GM12878 (cell line): ENCODE measurements at regions of chr12 and their contacts with region 1.

Region 1: GRCh38 chr12:49515266-49515665 is 23.6 kb upstream of the KCNH3 start:
- DNase-seq: no peak
- ATAC-seq: no peak
- H3K4me3 ChIP-seq: no peak overlapping the region
- H3K27ac ChIP-seq: no peak overlapping the region
- H3K4me1 ChIP-seq: no peaks in the 10 kb centered on the region
- H3K27me3 ChIP-seq: no peaks in the 10 kb centered on the region
- CTCF ChIP-seq: no peak
- EP300 ChIP-seq: no peak
- POLR2A ChIP-seq: no peak
- RAD21 ChIP-seq: no peak

Region 2: DNA sequence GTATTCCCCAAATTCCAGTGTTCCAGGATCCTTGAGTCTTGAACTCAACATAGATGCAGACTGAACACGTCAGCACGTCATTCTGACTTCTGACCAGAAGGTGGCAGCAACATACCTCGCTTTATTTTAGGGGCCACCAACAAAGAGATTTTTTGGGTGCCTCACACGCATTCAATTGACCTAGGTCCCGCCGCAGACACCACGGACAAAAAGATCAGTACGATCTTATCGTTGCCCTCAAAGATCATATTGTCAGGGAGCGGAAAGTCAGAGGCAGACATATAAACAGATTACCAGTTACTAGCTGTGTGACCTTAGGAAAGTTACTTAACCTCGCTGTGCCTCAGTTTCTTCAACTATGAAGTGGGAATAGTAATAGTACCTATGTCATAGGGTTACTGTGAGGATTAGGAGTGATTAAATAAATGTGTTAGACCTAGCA is 226.8 kb before region 1 on chr12:
- CTCF ChIA-PET with region 1: interaction called, 11 read pairs
- POLR2A ChIA-PET with region 1: no interaction called
- RAD21 ChIA-PET with region 1: interaction called, 5 read pairs
- SMC1A ChIA-PET with region 1: interaction called, 10 read pairs
- in situ Hi-C with region 1: no loop called
- intact Hi-C with region 1: loop called (anchors 1 kb)
- DNase-seq: peak; percentile 19
- ATAC-seq: peak; percentile 80
- H3K4me3 ChIP-seq: no peak overlapping the region
- H3K27ac ChIP-seq: no peak overlapping the region
- H3K4me1 ChIP-seq: no peaks in the 10 kb centered on the region
- H3K27me3 ChIP-seq: peaks cover 0 to 2% of the 10 kb centered on the region in 2 experiments; a peak in 2 of 4 replicates
- CTCF ChIP-seq: peak; percentile 69 to 86 (median 84)
- EP300 ChIP-seq: no peak
- POLR2A ChIP-seq: no peak
- RAD21 ChIP-seq: peak; percentile 85

Region 3: GRCh38 chr12:49347384-49348237 is 167.7 kb before region 1 on chr12:
- CTCF ChIA-PET with region 1: interaction called, 17 read pairs
- POLR2A ChIA-PET with region 1: no interaction called
- RAD21 ChIA-PET with region 1: interaction called, 5 read pairs
- SMC1A ChIA-PET with region 1: interaction called, 740 read pairs
- in situ Hi-C with region 1: no loop called
- intact Hi-C with region 1: no loop called
- DNase-seq: no peak
- ATAC-seq: peak; percentile 88
- H3K4me3 ChIP-seq: peak overlapping the region; percentile 49
- H3K27ac ChIP-seq: no peak overlapping the region
- H3K4me1 ChIP-seq: peaks cover 34% of the 10 kb centered on the region
- H3K27me3 ChIP-seq: peaks cover 13 to 22% of the 10 kb centered on the region in 2 experiments
- CTCF ChIP-seq: peak; percentile 85 to 96 (median 86)
- EP300 ChIP-seq: no peak
- POLR2A ChIP-seq: no peak
- RAD21 ChIP-seq: peak; percentile 47

Region 4: GRCh38 chr12:49451468-49452259 is 63.6 kb before region 1 on chr12:
- CTCF ChIA-PET with region 1: interaction called, 3 read pairs
- POLR2A ChIA-PET with region 1: interaction called, 8 read pairs
- RAD21 ChIA-PET with region 1: no interaction called
- SMC1A ChIA-PET with region 1: interaction called, 13 read pairs
- in situ Hi-C with region 1: no loop called
- intact Hi-C with region 1: no loop called
- DNase-seq: peak; percentile 62
- ATAC-seq: peak; percentile 96
- H3K4me3 ChIP-seq: no peak overlapping the region
- H3K27ac ChIP-seq: peak overlapping the region; percentile 74
- H3K4me1 ChIP-seq: peaks cover 18% of the 10 kb centered on the region
- H3K27me3 ChIP-seq: no peaks in the 10 kb centered on the region
- CTCF ChIP-seq: no peak
- EP300 ChIP-seq: no peak
- POLR2A ChIP-seq: no peak
- RAD21 ChIP-seq: no peak

Region 5: DNA sequence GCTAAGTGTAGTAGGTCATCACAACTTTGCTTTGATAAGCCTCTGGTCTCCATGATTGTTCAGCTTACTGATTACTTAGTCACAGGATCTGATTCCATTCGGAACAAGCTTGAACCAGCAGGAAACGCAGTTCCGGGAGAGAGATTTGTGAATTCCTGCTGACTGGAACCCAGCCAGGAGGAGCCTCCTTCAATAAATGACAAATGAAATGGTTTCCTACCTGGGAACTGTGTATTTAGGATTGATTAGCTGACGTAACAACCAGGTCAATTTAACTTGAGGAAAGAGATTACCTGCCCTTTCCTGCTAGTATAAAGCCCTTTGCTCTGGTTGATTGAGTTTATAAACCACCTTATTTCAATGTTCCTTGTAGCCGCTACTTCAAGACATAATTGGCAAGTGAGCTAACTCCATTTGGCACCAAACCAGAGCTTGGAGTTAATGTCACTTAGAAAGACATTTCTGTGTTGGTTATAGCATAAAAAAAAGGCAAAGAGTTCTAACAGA is 11.5 kb before region 1 on chr12:
- CTCF ChIA-PET with region 1: interaction called, 25 read pairs
- POLR2A ChIA-PET with region 1: interaction called, 5 read pairs
- RAD21 ChIA-PET with region 1: interaction called, 5 read pairs
- SMC1A ChIA-PET with region 1: interaction called, 43 read pairs
- in situ Hi-C with region 1: no loop called
- intact Hi-C with region 1: no loop called
- DNase-seq: no peak
- ATAC-seq: no peak
- H3K4me3 ChIP-seq: no peak overlapping the region
- H3K27ac ChIP-seq: no peak overlapping the region
- H3K4me1 ChIP-seq: peaks cover 11% of the 10 kb centered on the region
- H3K27me3 ChIP-seq: no peaks in the 10 kb centered on the region
- CTCF ChIP-seq: no peak
- EP300 ChIP-seq: no peak
- POLR2A ChIP-seq: no peak
- RAD21 ChIP-seq: no peak

Region 6: GRCh38 chr12:49580572-49581535 is 65.6 kb after region 1 on chr12:
- CTCF ChIA-PET with region 1: interaction called, 64 read pairs
- POLR2A ChIA-PET with region 1: interaction called, 3 read pairs
- RAD21 ChIA-PET with region 1: interaction called, 10 read pairs
- SMC1A ChIA-PET with region 1: interaction called, 10 read pairs
- in situ Hi-C with region 1: no loop called
- intact Hi-C with region 1: no loop called
- DNase-seq: no peak
- ATAC-seq: peak; percentile 92
- H3K4me3 ChIP-seq: peak overlapping the region; percentile 57; the same call in 1 of the 2 replicates
- H3K27ac ChIP-seq: peak overlapping the region; percentile 41
- H3K4me1 ChIP-seq: peaks cover 17% of the 10 kb centered on the region
- H3K27me3 ChIP-seq: no peaks in the 10 kb centered on the region
- CTCF ChIP-seq: peak; percentile 89 to 92 (median 90)
- EP300 ChIP-seq: no peak
- POLR2A ChIP-seq: no peak
- RAD21 ChIP-seq: peak; percentile 88

Region 7: DNA sequence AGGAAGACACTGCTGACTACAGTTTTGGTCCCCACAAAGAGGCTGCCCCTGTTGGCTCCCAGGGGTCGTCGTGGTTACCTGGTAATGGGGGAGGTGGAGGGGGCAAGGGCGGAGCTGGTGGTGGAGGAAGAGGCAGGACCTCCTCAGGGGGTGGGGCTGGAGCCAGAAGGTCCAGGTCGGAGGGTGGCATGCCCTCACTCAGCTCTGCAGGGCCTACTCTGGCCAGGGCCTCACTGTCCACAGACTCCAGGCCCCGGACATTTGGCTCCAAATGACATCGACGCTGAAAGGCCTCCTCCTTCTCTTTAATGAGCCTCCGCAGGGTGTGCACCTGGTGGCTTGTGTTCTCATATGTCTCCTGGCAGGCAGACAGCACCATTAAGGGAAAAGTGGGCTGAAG is 136.6 kb after region 1 on chr12:
- CTCF ChIA-PET with region 1: no interaction called
- POLR2A ChIA-PET with region 1: no interaction called
- RAD21 ChIA-PET with region 1: no interaction called
- SMC1A ChIA-PET with region 1: no interaction called
- in situ Hi-C with region 1: no loop called
- intact Hi-C with region 1: no loop called
- DNase-seq: no peak
- ATAC-seq: no peak
- H3K4me3 ChIP-seq: no peak overlapping the region
- H3K27ac ChIP-seq: no peak overlapping the region
- H3K4me1 ChIP-seq: no peaks in the 10 kb centered on the region
- H3K27me3 ChIP-seq: no peaks in the 10 kb centered on the region
- CTCF ChIP-seq: no peak
- EP300 ChIP-seq: no peak
- POLR2A ChIP-seq: no peak
- RAD21 ChIP-seq: no peak

Region 8: GRCh38 chr12:49828133-49829091 is 313.1 kb after region 1 on chr12 and contains the start of gene NCKAP5L:
- CTCF ChIA-PET with region 1: no interaction called
- POLR2A ChIA-PET with region 1: no interaction called
- RAD21 ChIA-PET with region 1: no interaction called
- SMC1A ChIA-PET with region 1: no interaction called
- in situ Hi-C with region 1: no loop called
- intact Hi-C with region 1: no loop called
- DNase-seq: no peak
- ATAC-seq: peak; percentile 97
- H3K4me3 ChIP-seq: peak within 1 kb of the TSS; percentile 99
- H3K27ac ChIP-seq: peak within 1 kb of the TSS; percentile 58
- H3K4me1 ChIP-seq: peaks cover 26% of the 10 kb centered on the region
- H3K27me3 ChIP-seq: no peaks in the 10 kb centered on the region
- CTCF ChIP-seq: no peak
- EP300 ChIP-seq: 0 out of 4 replicates have a peak, but pooled peaks of 1 of the 2 experiments have one; percentile 21
- POLR2A ChIP-seq: peak; percentile 85
- RAD21 ChIP-seq: no peak
- polyA plus RNA-seq, gene NCKAP5L: 0.03 to 0.16 TPM